ENCODE measurements at regions of chr5 and their contacts with region 1.

Region 1: GRCh38 chr5:169670769-169671525 is 33.9 kb downstream of the DOCK2 start:
- DNase-seq: peak; percentile 58
- H3K4me3 Mint-ChIP-seq: peak overlapping the region; percentile 4
- H3K27ac Mint-ChIP-seq: peak overlapping the region; percentile 79
- H3K4me1 Mint-ChIP-seq: peaks cover 61% of the 10 kb centered on the region
- H3K27me3 Mint-ChIP-seq: no peaks in the 10 kb centered on the region

Region 2: DNA sequence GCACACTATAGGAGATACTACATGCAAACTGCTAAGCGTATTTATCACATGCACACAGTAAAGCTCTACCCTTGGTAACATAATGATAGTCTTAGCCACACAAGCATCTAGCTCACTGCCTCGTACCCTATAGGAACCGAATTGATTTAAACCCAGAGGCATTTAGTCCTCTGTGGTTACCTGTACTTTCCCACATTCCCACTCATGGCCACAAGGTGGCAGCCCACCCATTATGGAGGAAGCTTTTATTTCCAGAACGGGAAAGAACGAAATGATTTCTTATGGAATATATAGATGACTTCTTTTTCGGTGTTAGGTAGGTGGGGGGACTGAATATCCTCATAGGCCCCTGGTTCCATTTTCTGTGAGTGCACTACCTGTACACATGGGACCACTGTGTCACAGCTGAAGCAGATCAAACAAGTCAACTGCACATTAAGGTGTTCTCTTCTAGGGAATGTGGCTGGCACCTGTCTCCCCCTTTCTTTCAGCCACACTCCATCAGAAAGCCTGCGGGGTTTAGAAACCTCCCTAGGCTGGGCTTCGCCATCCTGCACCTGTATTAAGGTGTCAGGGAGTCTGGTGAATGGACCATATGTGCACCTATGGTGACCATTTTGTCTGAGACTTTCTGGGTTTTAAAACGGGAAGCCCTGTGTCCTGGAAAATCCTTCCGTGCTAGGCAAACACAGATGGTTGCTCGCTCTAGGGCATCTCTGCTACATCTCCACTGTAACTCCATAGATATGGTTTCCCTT is 683.2 kb before region 1 on chr5:
- intact Hi-C with region 1: loop called (anchors 5 kb)
- DNase-seq: peak; percentile 18
- H3K4me3 Mint-ChIP-seq: no peak overlapping the region
- H3K27ac Mint-ChIP-seq: no peak overlapping the region
- H3K4me1 Mint-ChIP-seq: no peaks in the 10 kb centered on the region
- H3K27me3 Mint-ChIP-seq: peaks cover 4% of the 10 kb centered on the region

Region 3: DNA sequence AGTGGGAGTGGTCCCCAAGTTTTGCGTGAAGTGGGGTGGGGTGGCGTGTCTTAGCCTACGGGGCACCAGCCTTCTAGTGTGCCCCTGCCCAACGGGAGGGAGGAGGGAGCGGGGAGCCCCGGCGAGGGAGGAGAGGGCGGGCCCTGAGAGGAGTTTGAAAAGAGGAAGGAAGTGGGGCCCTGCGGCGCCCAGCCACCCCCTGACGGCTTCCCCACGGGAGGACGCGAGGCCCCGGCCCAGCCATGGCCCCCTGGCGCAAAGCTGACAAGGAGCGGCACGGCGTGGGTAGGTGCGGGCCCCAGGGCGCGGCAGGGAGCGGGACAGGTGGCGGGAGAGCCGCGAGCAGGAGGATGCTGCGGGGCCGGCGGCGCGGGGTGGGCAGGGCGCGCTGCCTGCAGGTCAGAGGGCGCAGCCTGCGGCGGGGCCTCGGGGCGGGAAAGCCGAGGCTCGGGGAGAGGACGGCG is 33.8 kb before region 1 on chr5 and contains the start of gene DOCK2:
- intact Hi-C with region 1: loop called (anchors 1 kb)
- DNase-seq: peak; percentile 68
- H3K4me3 Mint-ChIP-seq: peak within 1 kb of the TSS; percentile 86
- H3K27ac Mint-ChIP-seq: peak within 1 kb of the TSS; percentile 92
- H3K4me1 Mint-ChIP-seq: peaks cover 57% of the 10 kb centered on the region
- H3K27me3 Mint-ChIP-seq: no peaks in the 10 kb centered on the region
- total RNA-seq, gene DOCK2: 214 and 216 TPM in 2 replicates

Region 4: GRCh38 chr5:169650701-169651331 is 20.1 kb before region 1 on chr5:
- intact Hi-C with region 1: loop called (anchors 1 kb)
- DNase-seq: peak; percentile 37
- H3K4me3 Mint-ChIP-seq: peak overlapping the region; percentile 72
- H3K27ac Mint-ChIP-seq: peak overlapping the region; percentile 99
- H3K4me1 Mint-ChIP-seq: peaks cover 99% of the 10 kb centered on the region
- H3K27me3 Mint-ChIP-seq: no peaks in the 10 kb centered on the region

Region 5: DNA sequence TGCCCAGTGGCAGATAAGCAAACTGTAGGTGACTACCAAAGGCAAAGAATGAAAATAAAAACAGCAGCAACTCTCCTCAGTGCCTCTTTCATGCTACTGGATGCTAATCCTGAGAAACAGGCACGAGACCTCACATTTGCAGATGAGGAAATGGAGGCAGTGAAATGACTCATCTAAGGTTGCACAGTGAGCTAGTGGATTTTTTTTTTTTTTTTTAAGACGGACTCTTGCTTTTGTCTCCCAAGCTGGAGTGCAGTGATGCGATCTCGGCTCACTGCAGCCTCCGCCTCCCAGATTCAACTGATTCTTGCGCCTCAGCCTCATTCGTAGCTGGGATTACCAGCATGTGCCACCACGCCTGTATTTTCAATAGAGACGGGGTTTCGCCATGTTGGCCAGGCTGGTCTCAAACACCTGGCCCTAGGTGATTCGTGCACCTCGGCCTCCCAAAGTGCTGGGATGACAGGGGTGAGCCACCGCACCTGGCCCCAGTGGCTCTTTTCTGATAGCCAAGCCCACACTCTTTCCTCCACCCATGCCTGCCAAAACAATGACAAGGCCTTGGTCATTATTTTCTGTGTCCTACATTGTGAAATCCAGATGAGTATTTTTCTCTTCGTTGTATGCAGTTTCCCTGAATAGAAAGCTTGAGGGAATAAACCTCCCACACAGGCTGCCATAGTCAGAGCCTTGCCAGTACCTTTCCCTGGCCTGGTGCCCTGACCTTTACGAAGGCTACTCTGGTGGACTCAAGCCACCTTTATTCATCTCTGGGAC is 14.6 kb before region 1 on chr5:
- intact Hi-C with region 1: loop called (anchors 1 kb)
- DNase-seq: peak; percentile 35
- H3K4me3 Mint-ChIP-seq: peak overlapping the region; percentile 45
- H3K27ac Mint-ChIP-seq: peak overlapping the region; percentile 87
- H3K4me1 Mint-ChIP-seq: peaks cover 83% of the 10 kb centered on the region
- H3K27me3 Mint-ChIP-seq: no peaks in the 10 kb centered on the region